ENCODE measurements at regions of chr15 and their contacts with region 1.

Region 1: GRCh38 chr15:79184465-79184892 is 93.9 kb upstream of the RASGRF1 start:
- DNase-seq: peak; percentile 69
- ATAC-seq: peak; percentile 36
- H3K4me3 Mint-ChIP-seq: no peak overlapping the region
- H3K27ac Mint-ChIP-seq: no peak overlapping the region
- H3K4me1 Mint-ChIP-seq: no peaks in the 10 kb centered on the region
- H3K27me3 Mint-ChIP-seq: peaks cover 9% of the 10 kb centered on the region

Region 2: GRCh38 chr15:79007066-79007465 is 177.4 kb before region 1 on chr15:
- CTCF ChIA-PET with region 1: interaction called, 10 read pairs
- DNase-seq: peak; percentile 77
- ATAC-seq: peak; percentile 71
- H3K4me3 Mint-ChIP-seq: no peak overlapping the region
- H3K27ac Mint-ChIP-seq: no peak overlapping the region
- H3K4me1 Mint-ChIP-seq: peaks cover 13% of the 10 kb centered on the region
- H3K27me3 Mint-ChIP-seq: peaks cover 6% of the 10 kb centered on the region

Region 3: DNA sequence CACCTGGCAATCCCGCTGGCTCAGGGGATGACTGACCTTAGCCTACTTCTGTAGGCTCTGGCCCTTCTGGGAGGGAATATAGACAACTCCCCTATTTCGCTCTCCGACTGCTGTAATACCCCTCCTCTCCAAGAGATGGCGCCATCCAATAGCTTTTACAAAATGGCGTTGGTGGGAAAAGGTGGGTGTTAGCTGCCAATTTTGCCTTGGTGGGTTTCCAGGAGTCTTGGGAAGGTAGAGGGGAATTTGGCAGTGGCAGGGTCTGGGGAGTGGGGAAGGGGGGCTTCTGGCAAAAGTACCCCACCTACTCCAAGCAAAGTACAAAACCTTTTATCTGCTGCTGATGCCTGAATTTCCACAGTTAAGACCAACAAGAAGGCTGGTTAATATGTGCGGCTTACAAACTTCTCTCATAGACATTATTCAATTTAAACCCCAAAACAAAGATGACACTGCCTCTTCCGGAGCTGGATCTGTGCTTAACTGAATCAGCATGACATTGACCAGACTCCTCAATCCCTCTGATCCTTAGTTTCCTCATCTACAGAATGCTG is 156.0 kb before region 1 on chr15:
- CTCF ChIA-PET with region 1: interaction called, 80 read pairs
- DNase-seq: peak; percentile 59
- ATAC-seq: no peak
- H3K4me3 Mint-ChIP-seq: no peak overlapping the region
- H3K27ac Mint-ChIP-seq: no peak overlapping the region
- H3K4me1 Mint-ChIP-seq: no peaks in the 10 kb centered on the region
- H3K27me3 Mint-ChIP-seq: no peaks in the 10 kb centered on the region

Region 4: GRCh38 chr15:79172801-79173460 is 11.5 kb before region 1 on chr15:
- CTCF ChIA-PET with region 1: interaction called, 16 read pairs
- DNase-seq: peak; percentile 21
- ATAC-seq: no peak
- H3K4me3 Mint-ChIP-seq: no peak overlapping the region
- H3K27ac Mint-ChIP-seq: no peak overlapping the region
- H3K4me1 Mint-ChIP-seq: no peaks in the 10 kb centered on the region
- H3K27me3 Mint-ChIP-seq: peaks cover 24% of the 10 kb centered on the region

Region 5: GRCh38 chr15:79540558-79540957 is 356.1 kb after region 1 on chr15:
- CTCF ChIA-PET with region 1: no interaction called
- DNase-seq: no peak
- ATAC-seq: no peak
- H3K4me3 Mint-ChIP-seq: no peak overlapping the region
- H3K27ac Mint-ChIP-seq: no peak overlapping the region
- H3K4me1 Mint-ChIP-seq: no peaks in the 10 kb centered on the region
- H3K27me3 Mint-ChIP-seq: peaks cover 2% of the 10 kb centered on the region